ENCODE measurements at regions of chr2 and their contacts with region 1.

Region 1: GRCh38 chr2:113138428-113139322 is 11.3 kb downstream of the IL1RN start:
- DNase-seq: peak; percentile 49
- H3K4me3 ChIP-seq: no peak overlapping the region
- H3K27ac ChIP-seq: no peak overlapping the region
- H3K4me1 ChIP-seq: no peaks in the 10 kb centered on the region
- H3K27me3 ChIP-seq: peaks cover 19% of the 10 kb centered on the region; the same call in 1 of the 2 replicates
- CTCF ChIP-seq: peak; percentile 81
- EP300 ChIP-seq: no peak
- RAD21 ChIP-seq: peak; percentile 55

Region 2: DNA sequence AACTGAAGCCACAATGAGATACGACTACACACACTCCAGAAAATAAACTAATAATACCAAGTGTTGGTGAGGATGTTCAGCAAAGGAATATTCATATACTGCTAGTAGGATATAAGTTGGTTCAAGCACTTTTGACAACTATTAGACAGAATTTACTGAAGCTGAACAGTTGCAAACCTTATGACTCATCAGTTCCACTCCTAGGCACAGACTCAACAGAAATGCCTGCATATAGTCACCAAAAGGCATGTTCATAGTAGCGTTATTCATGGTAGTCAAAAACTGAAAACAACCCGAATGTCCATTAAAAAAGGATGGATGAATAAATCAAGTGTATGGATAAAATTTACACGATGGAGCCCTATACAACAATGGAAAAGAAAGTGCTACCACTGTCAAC is 1486.6 kb before region 1 on chr2:
- CTCF ChIA-PET with region 1: no interaction called
- POLR2A ChIA-PET with region 1: no interaction called
- DNase-seq: no peak
- H3K4me3 ChIP-seq: no peak overlapping the region
- H3K27ac ChIP-seq: no peak overlapping the region
- H3K4me1 ChIP-seq: peaks cover 0 to 5% of the 10 kb centered on the region in 2 experiments; a peak in 1 of 4 replicates
- H3K27me3 ChIP-seq: no peaks in the 10 kb centered on the region
- CTCF ChIP-seq: no peak
- EP300 ChIP-seq: no peak
- RAD21 ChIP-seq: no peak

Region 3: DNA sequence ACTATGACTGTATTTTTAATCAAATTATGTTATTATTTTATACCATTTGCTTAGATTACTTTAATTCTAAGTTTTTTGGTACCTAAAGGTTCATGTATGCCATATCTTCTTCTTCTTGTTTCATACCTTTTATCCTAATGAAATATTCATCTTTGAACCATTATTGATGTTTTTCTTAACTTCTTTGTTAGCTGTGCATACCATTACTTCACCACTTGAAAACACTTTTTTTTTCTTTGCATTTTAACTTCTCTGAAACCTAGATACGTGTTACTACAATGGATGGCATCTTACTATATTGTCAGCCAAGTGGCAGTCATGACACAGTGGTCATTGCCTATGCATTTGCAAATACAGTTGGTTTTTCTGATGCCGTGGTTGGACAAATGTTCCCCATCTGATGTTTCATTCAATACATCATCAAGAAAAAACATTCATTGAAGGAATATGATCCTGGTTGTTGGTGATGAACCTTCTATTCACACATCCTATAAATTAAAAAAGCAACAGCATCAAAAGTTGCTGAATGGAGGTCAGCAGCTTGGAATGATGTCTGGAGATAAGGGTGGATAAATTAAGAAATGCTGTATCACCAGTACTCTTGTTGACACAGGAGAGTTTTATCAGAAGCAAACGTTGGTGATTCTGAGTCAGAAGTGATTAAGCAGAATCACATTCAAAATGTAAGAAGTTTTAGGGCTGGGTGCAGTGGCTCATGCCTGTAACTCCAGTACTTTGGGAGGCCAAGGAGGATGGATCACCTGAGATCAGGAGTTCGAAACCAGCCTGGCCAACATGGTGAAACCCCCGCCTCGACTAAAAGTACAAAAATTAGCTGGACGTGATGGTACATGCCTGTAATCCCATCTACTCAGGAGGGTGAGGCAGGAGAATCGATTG is 126.0 kb before region 1 on chr2:
- CTCF ChIA-PET with region 1: no interaction called
- POLR2A ChIA-PET with region 1: no interaction called
- DNase-seq: no peak
- H3K4me3 ChIP-seq: no peak overlapping the region
- H3K27ac ChIP-seq: no peak overlapping the region
- H3K4me1 ChIP-seq: no peaks in the 10 kb centered on the region
- H3K27me3 ChIP-seq: no peaks in the 10 kb centered on the region; the same call in 1 of the 2 replicates
- CTCF ChIP-seq: no peak
- EP300 ChIP-seq: no peak
- RAD21 ChIP-seq: no peak

Region 4: DNA sequence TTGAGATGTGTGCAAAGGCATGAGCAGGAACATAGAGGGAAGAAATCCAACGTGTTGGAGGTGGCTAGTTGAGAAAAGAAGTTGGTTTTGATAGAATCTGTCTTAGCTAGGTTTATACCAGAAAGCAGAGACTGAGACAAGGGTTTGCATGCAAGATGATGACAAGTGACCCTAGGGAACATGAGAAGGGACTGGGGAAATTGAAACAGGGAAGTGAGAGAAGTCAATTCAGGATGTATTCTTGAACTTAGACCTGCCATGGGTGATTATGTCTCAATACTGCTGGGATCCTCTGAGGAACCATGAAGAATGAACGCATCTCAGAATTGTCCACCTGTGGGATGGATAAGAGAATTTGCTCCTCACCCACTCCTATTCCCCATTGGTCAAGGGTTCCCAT is 112.9 kb before region 1 on chr2:
- CTCF ChIA-PET with region 1: no interaction called
- POLR2A ChIA-PET with region 1: no interaction called
- DNase-seq: no peak
- H3K4me3 ChIP-seq: no peak overlapping the region
- H3K27ac ChIP-seq: no peak overlapping the region
- H3K4me1 ChIP-seq: no peaks in the 10 kb centered on the region
- H3K27me3 ChIP-seq: peaks cover 5% of the 10 kb centered on the region; the same call in 1 of the 2 replicates
- CTCF ChIP-seq: no peak
- EP300 ChIP-seq: no peak
- RAD21 ChIP-seq: no peak

Region 5: DNA sequence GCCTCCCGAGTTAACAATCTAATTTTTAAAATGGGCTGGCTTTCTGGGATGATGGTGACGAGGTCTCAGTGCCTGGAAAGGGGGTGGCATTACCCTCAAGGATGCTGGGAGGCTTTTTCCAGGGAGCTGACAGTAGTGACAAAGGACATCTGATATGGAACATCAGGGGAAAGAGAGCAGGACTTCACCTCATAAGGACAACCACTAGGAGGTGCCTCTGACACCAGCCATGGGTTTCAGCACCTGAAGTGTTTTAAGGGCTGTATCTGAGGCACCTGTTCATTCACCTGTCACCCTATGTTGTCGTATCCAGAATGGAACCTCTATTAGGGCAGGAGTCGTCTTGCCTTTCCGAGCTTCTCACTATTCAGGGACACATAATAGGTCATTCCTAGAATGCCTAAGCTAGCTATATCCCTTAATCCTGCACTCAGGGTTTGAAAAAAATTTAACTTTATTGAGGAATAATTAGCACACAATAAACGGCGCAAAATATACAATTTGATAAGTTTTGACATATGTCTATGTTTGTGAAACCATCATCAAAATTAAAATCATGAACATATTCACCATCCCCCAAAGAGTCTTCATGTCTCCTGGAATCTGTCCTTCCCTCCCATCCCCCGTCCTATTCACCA is 96.7 kb before region 1 on chr2:
- CTCF ChIA-PET with region 1: no interaction called
- POLR2A ChIA-PET with region 1: no interaction called
- DNase-seq: no peak
- H3K4me3 ChIP-seq: no peak overlapping the region
- H3K27ac ChIP-seq: no peak overlapping the region
- H3K4me1 ChIP-seq: no peaks in the 10 kb centered on the region
- H3K27me3 ChIP-seq: peaks cover 5% of the 10 kb centered on the region; the same call in 1 of the 2 replicates
- CTCF ChIP-seq: no peak
- EP300 ChIP-seq: no peak
- RAD21 ChIP-seq: no peak

Region 6: GRCh38 chr2:113124181-113124961 is 14.3 kb before region 1 on chr2:
- CTCF ChIA-PET with region 1: interaction called, 51 read pairs
- POLR2A ChIA-PET with region 1: no interaction called
- DNase-seq: no peak
- H3K4me3 ChIP-seq: no peak overlapping the region; a peak in 1 of 4 replicates
- H3K27ac ChIP-seq: no peak overlapping the region
- H3K4me1 ChIP-seq: no peaks in the 10 kb centered on the region
- H3K27me3 ChIP-seq: peaks cover 15% of the 10 kb centered on the region
- CTCF ChIP-seq: no peak
- EP300 ChIP-seq: no peak
- RAD21 ChIP-seq: no peak

Region 7: DNA sequence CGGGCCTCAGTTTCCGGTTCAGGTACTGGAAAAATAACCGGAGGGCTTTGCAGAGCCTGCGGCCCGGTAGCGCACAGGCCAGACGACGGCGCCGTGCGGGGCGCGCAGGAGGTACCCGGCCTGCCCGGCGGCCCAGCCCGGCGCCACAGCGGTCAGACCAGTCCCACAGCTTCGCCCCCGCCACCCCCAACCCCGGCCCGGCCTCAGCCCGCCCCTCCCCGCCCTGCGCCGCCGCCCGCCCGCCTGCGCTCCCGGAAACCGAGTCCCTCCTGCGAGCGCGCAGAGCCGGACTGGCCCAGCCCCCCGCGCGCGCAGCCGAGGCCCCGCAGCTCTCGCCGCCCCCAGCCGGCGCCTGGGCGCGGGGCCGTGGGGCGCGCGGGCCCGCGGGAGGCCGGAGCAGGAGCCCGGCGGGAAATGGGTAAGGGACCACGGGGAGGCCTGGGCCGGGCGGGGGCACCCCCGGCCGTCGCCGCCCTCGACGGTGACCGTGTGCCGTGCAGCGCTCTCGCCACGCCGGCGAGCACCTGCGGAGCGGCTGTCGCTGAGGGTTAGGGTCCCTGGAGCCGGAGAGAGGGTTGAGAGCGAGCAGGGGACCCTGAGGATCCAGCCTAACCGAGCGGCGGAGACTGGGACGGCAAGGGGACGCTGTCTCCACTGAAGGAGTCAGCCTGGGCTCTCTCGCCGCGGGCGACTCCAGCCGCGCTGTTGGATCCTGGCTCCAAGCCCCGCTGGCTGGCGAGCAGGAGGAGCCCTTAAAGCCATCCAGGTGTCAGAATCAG is 18.6 kb after region 1 on chr2:
- CTCF ChIA-PET with region 1: interaction called, 24 read pairs
- POLR2A ChIA-PET with region 1: no interaction called
- DNase-seq: peak; percentile 44
- H3K4me3 ChIP-seq: no peak overlapping the region
- H3K27ac ChIP-seq: no peak overlapping the region
- H3K4me1 ChIP-seq: no peaks in the 10 kb centered on the region
- H3K27me3 ChIP-seq: peaks cover 35% of the 10 kb centered on the region; the same call in 1 of the 2 replicates
- CTCF ChIP-seq: no peak
- EP300 ChIP-seq: no peak
- RAD21 ChIP-seq: no peak

Region 8: DNA sequence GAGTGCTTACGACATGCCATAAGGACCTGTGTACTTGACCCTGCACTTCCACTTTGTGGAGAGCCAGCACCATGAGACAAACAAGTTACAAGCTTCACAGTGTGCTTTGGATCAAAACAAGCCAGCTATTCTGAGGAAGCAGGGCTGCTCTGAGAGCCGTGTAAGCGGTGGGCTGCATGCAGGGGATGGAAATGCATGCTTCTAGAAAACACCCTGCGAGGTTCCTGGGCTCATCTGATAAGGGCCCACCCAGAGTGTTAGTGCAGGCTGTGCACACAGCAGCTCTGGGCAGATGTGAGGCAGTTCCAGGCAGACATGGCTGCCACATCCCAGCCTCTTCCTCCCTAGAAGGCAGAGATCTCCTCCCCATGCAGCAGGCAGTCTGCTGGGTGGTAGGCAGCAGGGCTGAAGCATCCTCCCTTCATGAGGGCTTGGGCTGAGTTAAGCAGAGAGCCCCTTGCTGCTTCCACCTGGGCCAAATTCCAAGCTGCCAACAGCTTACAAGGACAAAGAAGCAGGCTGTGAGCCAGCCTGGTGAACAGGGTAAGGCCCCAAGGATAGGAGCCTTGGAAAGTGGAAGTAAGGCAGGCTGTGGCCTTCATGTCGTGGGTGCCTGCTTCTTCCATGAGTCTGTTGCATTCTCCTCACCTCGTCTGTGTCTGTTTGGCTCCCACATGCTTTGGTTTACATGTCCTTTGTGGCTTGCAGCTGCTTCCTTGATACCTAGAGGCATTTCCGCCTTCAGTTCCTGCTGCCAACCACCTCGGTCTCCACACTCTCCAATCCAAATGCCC is 42.8 kb after region 1 on chr2:
- CTCF ChIA-PET with region 1: interaction called, 13 read pairs
- POLR2A ChIA-PET with region 1: no interaction called
- DNase-seq: no peak
- H3K4me3 ChIP-seq: no peak overlapping the region
- H3K27ac ChIP-seq: no peak overlapping the region
- H3K4me1 ChIP-seq: no peaks in the 10 kb centered on the region; a peak in 1 of 4 replicates
- H3K27me3 ChIP-seq: peaks cover 5% of the 10 kb centered on the region; the same call in 1 of the 2 replicates
- CTCF ChIP-seq: no peak
- EP300 ChIP-seq: no peak
- RAD21 ChIP-seq: no peak

Region 9: DNA sequence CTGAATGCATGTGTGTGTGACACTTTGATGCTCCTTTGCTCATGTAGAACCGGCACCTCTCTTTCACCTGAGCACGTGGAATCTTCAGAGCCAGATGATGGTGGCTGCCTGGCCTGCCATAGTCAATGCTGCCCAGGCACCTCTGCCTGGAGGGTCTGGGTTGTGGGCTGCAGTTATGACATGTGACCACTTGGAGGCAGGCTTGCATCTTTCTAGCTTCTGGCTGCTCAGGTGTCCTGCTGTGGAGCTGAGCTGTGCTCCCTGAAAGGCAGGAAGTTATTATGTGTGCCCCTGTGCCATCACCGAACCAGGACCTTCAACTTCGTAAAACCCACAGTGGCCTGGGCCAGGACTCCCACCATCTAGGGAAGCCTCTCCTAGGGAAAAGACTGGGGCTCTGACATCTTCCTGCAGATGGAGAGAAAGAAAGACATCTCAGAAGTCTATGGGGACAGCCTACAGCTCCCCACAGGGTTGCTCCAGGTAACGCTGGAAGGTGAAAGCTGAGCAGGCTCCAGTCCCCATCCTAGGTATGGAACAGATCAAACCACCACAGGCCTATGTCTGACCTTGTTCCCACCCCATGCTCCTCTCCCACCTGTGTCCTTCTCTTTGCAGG is 65.3 kb after region 1 on chr2:
- CTCF ChIA-PET with region 1: interaction called, 59 read pairs
- POLR2A ChIA-PET with region 1: no interaction called
- DNase-seq: peak; percentile 86
- H3K4me3 ChIP-seq: no peak overlapping the region; a peak in 1 of 4 replicates
- H3K27ac ChIP-seq: no peak overlapping the region
- H3K4me1 ChIP-seq: no peaks in the 10 kb centered on the region; a peak in 1 of 4 replicates
- H3K27me3 ChIP-seq: no peaks in the 10 kb centered on the region
- CTCF ChIP-seq: peak; percentile 88
- EP300 ChIP-seq: no peak
- RAD21 ChIP-seq: peak; percentile 96

Region 10: DNA sequence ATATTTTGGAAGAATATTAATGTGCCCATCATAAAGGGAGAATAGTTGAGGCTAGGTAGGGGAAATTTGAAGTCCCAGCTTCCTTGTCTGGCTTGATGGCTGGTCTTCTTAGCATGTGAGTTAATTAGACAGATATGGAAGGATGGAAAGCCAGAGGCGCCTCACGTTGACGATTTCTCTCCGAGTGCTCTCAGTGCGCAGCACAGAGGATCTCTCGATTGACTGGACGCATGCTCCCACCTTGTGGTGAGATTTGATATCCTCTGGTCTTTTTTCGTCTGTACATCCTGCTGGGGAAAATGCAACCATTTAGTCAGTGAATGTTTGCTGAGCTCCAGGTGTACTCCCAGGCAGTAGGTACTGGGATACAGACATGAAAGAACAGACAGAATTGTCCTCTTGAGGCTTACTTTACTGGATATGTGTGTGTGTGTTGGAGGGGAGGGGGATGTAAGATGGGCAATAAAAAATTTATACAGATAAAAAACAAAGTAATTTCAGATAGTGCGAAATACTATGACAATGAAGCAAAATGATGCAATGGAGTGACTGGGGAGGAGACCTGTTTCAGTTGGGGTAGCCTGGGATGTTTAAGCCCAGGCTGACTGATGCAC is 231.9 kb after region 1 on chr2:
- CTCF ChIA-PET with region 1: interaction called, 43 read pairs
- POLR2A ChIA-PET with region 1: no interaction called
- DNase-seq: peak; percentile 58
- H3K4me3 ChIP-seq: no peak overlapping the region; a peak in 1 of 4 replicates
- H3K27ac ChIP-seq: no peak overlapping the region
- H3K4me1 ChIP-seq: no peaks in the 10 kb centered on the region
- H3K27me3 ChIP-seq: peaks cover 21% of the 10 kb centered on the region; the same call in 1 of the 2 replicates
- CTCF ChIP-seq: peak; percentile 69
- EP300 ChIP-seq: no peak
- RAD21 ChIP-seq: peak; percentile 85

Measured in SK-N-SH (cell line).